WTC11 (cell line): ENCODE measurements at regions of chr17 and their contacts with region 1.

Region 1: DNA sequence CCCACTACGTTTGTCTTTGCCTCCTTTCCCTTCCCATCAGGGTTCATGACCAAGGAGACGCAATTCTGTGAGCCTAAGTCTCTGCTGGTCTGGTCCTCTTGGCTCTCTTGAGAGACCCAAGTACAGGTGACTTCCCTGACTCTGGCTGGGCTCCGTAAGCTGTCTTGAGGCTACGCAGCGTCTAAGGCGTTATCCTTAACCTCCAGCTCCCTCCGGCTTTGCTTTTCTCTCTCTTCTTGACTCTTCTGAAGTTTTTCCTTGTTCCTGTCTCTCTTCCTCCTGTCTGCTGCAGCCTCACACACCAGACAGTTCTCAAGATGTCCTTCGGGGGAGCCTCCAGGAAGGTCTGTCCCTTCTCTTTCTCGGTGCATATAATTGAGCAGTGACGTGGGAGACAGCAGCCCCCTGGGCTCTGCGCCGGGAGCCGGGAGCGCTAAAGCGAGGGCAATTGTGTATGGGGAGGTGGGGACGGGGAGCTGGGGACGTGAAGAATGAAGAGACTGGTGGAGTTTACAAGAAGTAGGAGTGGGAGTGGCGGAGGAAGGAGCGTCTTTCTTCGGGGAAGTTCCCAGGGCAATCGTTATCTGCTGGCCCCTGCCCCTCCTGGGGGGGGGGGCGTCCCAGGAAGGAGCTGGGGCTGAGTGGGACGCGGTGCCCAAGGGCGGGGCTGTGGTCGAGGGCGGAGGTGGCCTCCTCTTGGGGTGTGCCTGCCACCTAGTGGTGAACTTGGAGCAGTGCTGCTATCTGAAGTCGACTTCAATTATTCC is 6.9 kb upstream of the PIRT start:
- DNase-seq: peak; percentile 82
- ATAC-seq: peak; percentile 89
- H3K4me3 Mint-ChIP-seq: peak overlapping the region; percentile 82
- H3K27ac Mint-ChIP-seq: no peak overlapping the region
- H3K4me1 Mint-ChIP-seq: peaks cover 21% of the 10 kb centered on the region
- H3K27me3 Mint-ChIP-seq: peaks cover 24% of the 10 kb centered on the region
- CTCF ChIP-seq: peak; percentile 93

Region 2: GRCh38 chr17:10631048-10631700 is 213.6 kb before region 1 on chr17:
- CTCF ChIA-PET with region 1: interaction called, 17 read pairs
- POLR2A ChIA-PET with region 1: no interaction called
- DNase-seq: peak; percentile 69
- ATAC-seq: peak; percentile 58
- H3K4me3 Mint-ChIP-seq: no peak overlapping the region
- H3K27ac Mint-ChIP-seq: no peak overlapping the region
- H3K4me1 Mint-ChIP-seq: 0 out of 2 replicates have a peak, but pooled peaks cover 3% of the 10 kb centered on the region
- H3K27me3 Mint-ChIP-seq: no peaks in the 10 kb centered on the region
- CTCF ChIP-seq: peak; percentile 74

Region 3: GRCh38 chr17:10737168-10737622 is 107.6 kb before region 1 on chr17:
- CTCF ChIA-PET with region 1: interaction called, 99 read pairs
- POLR2A ChIA-PET with region 1: no interaction called
- DNase-seq: peak; percentile 60
- ATAC-seq: peak; percentile 92
- H3K4me3 Mint-ChIP-seq: no peak overlapping the region
- H3K27ac Mint-ChIP-seq: no peak overlapping the region
- H3K4me1 Mint-ChIP-seq: peaks cover 21% of the 10 kb centered on the region
- H3K27me3 Mint-ChIP-seq: no peaks in the 10 kb centered on the region
- CTCF ChIP-seq: peak; percentile 26; the same call in 1 of the 2 replicates

Region 4: DNA sequence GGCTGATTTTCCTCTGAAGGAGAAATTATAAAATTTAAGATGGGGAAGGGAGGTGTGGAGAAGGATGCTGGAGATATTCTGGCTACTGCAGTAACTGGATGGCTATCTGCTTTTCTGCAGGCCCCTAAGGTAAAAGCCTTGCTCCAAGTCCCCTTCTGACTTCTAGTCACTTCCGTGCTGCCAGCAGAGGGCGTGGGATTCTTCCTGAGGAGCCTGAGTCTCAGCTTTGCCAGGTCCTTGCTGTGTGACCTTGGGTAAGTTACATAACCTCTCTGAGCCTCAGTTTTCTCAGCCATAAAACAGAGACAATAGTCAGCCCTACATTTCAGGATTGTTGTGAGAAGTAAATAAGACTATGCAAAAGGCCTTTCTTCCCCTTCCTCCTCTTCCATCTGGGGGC is 90.7 kb before region 1 on chr17:
- CTCF ChIA-PET with region 1: interaction called, 50 read pairs
- POLR2A ChIA-PET with region 1: no interaction called
- DNase-seq: peak; percentile 80
- ATAC-seq: peak; percentile 48
- H3K4me3 Mint-ChIP-seq: no peak overlapping the region; the same call in 1 of the 2 replicates
- H3K27ac Mint-ChIP-seq: no peak overlapping the region
- H3K4me1 Mint-ChIP-seq: peaks cover 54% of the 10 kb centered on the region
- H3K27me3 Mint-ChIP-seq: no peaks in the 10 kb centered on the region
- CTCF ChIP-seq: 0 out of 2 replicates have a peak, but pooled peaks have one; percentile 18

Region 5: GRCh38 chr17:10772425-10773380 is 72.1 kb before region 1 on chr17:
- CTCF ChIA-PET with region 1: interaction called, 84 read pairs
- POLR2A ChIA-PET with region 1: interaction called, 5 read pairs
- DNase-seq: peak; percentile 89
- ATAC-seq: peak; percentile 76
- H3K4me3 Mint-ChIP-seq: no peak overlapping the region
- H3K27ac Mint-ChIP-seq: no peak overlapping the region
- H3K4me1 Mint-ChIP-seq: peaks cover 13% of the 10 kb centered on the region; the same call in 1 of the 2 replicates
- H3K27me3 Mint-ChIP-seq: no peaks in the 10 kb centered on the region; the same call in 1 of the 2 replicates
- CTCF ChIP-seq: peak; percentile 94

Region 6: GRCh38 chr17:10805911-10806310 is 38.9 kb before region 1 on chr17:
- CTCF ChIA-PET with region 1: no interaction called
- POLR2A ChIA-PET with region 1: no interaction called
- DNase-seq: no peak
- ATAC-seq: no peak
- H3K4me3 Mint-ChIP-seq: no peak overlapping the region
- H3K27ac Mint-ChIP-seq: no peak overlapping the region
- H3K4me1 Mint-ChIP-seq: peaks cover 21% of the 10 kb centered on the region
- H3K27me3 Mint-ChIP-seq: no peaks in the 10 kb centered on the region
- CTCF ChIP-seq: no peak

Region 7: DNA sequence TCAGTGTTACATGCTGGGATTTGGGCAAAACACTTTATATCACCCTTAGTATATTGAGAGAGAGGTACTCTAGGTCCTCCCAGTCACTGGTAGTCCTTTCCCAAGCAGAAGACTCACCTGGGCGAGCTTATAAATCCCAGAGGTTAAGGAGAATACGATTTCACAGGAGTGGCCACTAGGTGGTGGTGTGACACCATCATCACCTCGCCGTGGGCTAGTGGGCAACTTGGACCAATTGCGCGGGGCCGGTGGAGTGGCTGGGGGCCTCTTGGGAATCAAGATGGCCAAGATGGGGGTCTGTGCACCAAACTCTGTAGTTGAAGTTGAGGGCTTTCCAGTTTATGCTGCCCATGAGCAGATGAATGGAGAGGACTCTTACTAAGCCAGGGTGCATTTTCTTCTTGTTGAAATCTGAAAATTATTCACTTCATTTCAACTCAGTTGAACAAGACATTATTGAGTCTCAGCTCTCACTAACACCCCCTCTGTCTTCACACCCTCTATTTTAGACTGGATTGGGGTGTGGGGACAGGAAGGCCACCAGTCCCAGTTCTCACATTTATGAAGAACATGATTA is 31.3 kb after region 1 on chr17:
- CTCF ChIA-PET with region 1: interaction called, 13 read pairs
- POLR2A ChIA-PET with region 1: no interaction called
- DNase-seq: peak; percentile 79
- ATAC-seq: peak; percentile 82
- H3K4me3 Mint-ChIP-seq: no peak overlapping the region
- H3K27ac Mint-ChIP-seq: no peak overlapping the region
- H3K4me1 Mint-ChIP-seq: no peaks in the 10 kb centered on the region
- H3K27me3 Mint-ChIP-seq: no peaks in the 10 kb centered on the region; the same call in none of the 2 replicates
- CTCF ChIP-seq: peak; percentile 59